ENCODE measurements at regions of chr3 and their contacts with region 1.

Region 1: DNA sequence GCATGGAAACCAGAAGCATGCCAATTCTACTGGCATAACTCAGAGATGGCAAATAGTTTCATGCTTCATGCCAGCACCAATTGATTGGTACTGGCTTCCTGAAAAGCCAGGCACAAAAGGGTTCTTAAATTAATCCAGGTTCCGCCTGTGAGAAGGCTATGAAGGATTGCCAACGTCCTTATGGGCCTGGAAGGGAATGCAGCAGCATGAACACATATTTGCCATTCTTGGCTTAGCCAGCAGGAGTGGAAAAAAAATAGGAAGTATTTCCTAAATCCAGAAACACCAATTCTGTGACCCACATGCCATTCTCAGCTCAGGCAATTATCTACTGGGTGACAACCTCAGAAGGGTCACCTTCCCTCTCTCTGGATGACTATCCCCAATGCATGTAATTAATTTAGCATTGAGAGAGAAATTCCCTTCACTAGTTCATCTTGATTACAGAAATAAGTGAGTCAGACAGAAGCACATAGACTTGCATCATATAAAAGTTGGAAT is 36.0 kb downstream of the ADAMTS9 start:
- DNase-seq: no peak
- ATAC-seq: peak; percentile 11 to 51 (median 20)
- H3K4me3 ChIP-seq: no peak overlapping the region
- H3K27ac ChIP-seq: peak overlapping the region in 5 of 12 donors; percentile 28 to 72 (median 61)
- H3K4me1 ChIP-seq: peaks cover 0 to 28% (median 15%) of the 10 kb centered on the region in 12 donors
- H3K27me3 ChIP-seq: no peaks in the 10 kb centered on the region
- CTCF ChIP-seq: no peak
- POLR2A ChIP-seq: no peak

Region 2: GRCh38 chr3:64584179-64584578 is 67.6 kb before region 1 on chr3:
- intact Hi-C with region 1: loop called in 1 of 10 experiments (anchors 10 kb)
- DNase-seq: no peak
- ATAC-seq: peak in 2 of 4 donors; percentile 26 to 34
- H3K4me3 ChIP-seq: no peak overlapping the region
- H3K27ac ChIP-seq: peak overlapping the region in 4 of 12 donors; percentile 2 to 25 (median 12)
- H3K4me1 ChIP-seq: peaks cover 0 to 10% (median 2%) of the 10 kb centered on the region in 12 donors
- H3K27me3 ChIP-seq: no peaks in the 10 kb centered on the region
- CTCF ChIP-seq: no peak
- POLR2A ChIP-seq: no peak

Region 3: GRCh38 chr3:64759811-64760210 is 108.0 kb after region 1 on chr3:
- intact Hi-C with region 1: no loop called
- DNase-seq: no peak
- ATAC-seq: peak; percentile 61 to 74 (median 72)
- H3K4me3 ChIP-seq: no peak overlapping the region
- H3K27ac ChIP-seq: peak overlapping the region in 3 of 12 donors; percentile 35 to 50 (median 40)
- H3K4me1 ChIP-seq: peaks cover 0 to 36% (median 19%) of the 10 kb centered on the region in 12 donors
- H3K27me3 ChIP-seq: no peaks in the 10 kb centered on the region
- CTCF ChIP-seq: no peak
- POLR2A ChIP-seq: no peak

Region 4: DNA sequence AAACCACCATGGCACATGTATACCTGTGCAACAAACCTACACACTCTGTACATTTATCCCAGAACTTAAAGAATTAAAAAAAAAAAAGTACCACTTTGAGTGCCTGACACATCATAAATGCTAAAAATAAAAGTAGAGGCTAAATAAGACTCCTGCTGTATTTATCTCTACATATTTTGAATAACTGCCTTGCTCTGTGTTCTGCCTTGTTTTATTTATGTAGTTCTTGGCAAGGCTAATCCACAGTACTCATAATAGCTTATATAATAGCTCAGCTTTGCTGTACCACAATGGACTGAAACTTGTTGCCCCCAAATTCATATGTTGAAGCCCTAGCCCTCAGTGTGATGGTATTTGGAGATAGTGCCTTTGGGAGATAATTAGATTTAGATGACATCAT is 131.4 kb after region 1 on chr3:
- intact Hi-C with region 1: no loop called
- DNase-seq: no peak
- ATAC-seq: peak; percentile 53 to 73 (median 61)
- H3K4me3 ChIP-seq: no peak overlapping the region
- H3K27ac ChIP-seq: peak overlapping the region in 1 of 12 donors; percentile 39
- H3K4me1 ChIP-seq: peaks cover 0 to 2% (median 0%) of the 10 kb centered on the region in 12 donors
- H3K27me3 ChIP-seq: no peaks in the 10 kb centered on the region
- CTCF ChIP-seq: no peak
- POLR2A ChIP-seq: no peak